ENCODE measurements at regions of chr11 and their contacts with region 1.

Region 1: DNA sequence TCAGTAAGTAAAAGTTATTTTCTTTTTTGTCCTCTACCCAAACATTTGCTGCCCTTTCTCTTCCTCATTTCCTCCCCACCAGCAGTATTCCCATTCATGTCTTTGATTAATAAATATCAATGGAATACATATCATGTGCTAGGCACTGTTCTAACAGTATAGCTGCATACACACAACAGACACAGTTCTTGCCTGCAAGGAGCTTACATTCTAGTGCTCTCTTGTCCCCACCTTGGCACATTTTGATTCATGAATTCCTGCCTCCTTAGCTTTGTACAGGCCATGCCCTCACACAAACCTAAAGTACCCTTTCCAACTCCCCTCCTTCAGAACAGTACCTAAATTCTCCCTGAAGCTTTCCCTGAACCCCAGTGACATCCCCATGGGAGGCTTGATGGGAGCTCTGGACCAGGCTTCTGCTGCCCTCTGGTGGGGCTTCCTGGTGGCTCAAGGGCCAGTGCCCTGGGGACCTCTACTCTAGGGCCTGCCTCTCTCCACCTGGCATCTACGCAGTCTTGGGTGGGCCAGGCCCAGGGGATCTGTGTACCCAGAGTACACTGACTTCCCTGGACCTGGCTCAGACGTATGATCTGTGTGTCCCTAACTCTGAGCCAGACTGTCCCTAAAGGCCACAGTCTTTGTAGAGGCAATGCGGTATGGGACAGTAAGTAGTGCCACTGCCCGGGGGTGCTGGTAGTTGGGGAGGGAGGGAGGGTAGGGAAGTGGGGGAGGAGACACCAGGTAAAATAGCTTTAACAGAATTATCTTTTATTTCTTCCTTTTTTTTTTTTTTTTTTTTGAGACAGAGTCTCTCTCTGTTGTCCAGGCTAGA is 14.1 kb downstream of the RPS13 start:
- DNase-seq: peak; percentile 74
- H3K4me3 ChIP-seq: no peak overlapping the region
- H3K27ac ChIP-seq: no peak overlapping the region
- H3K4me1 ChIP-seq: no peaks in the 10 kb centered on the region
- H3K27me3 ChIP-seq: no peaks in the 10 kb centered on the region
- CTCF ChIP-seq: peak; percentile 69 to 78 (median 75)
- EP300 ChIP-seq: no peak
- POLR2A ChIP-seq: no peak

Region 2: GRCh38 chr11:16809886-16810668 is 253.3 kb before region 1 on chr11:
- in situ Hi-C with region 1: loop called in 3 of 4 experiments (anchors 10 to 25 kb)
- intact Hi-C with region 1: no loop called
- DNase-seq: no peak
- H3K4me3 ChIP-seq: no peak overlapping the region
- H3K27ac ChIP-seq: no peak overlapping the region
- H3K4me1 ChIP-seq: peaks cover 0 to 15% (median 2%) of the 10 kb centered on the region in 4 donors
- H3K27me3 ChIP-seq: no peaks in the 10 kb centered on the region
- CTCF ChIP-seq: no peak
- EP300 ChIP-seq: no peak
- POLR2A ChIP-seq: no peak

Region 3: DNA sequence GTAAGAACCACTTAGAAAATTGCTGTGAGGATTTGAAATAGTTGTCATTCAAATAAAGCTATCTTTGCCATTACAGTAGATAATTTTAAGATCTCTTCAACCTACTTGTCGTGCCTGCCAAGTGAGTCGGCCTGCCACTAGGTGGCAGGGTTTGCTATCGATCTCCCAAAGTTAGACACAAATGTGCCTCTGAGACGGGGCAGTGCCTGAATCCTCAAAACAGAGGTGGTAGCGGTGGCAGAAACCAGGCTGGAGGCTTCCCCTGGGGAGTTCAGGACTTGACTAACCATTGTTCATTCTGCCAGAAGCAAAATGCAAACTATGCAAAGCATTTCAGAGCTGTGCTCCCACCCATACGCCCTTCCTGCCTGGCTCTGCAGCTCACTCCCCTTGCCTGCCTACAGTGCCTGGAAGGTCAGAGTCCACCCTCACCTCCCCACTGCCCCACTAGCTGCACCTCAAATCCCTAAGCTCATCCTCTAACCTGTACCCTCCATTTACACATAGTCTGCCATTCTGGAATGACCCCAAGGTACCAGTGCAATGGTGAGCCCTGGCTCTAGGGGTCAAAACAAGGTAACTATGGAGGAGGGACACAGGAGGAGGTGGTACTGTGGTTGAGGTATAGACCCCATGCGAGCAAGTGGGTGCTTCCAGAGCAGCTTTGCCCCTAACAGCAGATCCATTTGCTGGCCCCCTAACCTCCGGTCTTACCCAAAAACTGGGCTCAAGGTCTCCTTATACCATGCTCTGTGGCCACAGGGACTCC is 242.9 kb before region 1 on chr11:
- in situ Hi-C with region 1: loop called in 3 of 4 experiments (anchors 10 to 25 kb)
- intact Hi-C with region 1: no loop called
- DNase-seq: peak; percentile 80
- H3K4me3 ChIP-seq: no peak overlapping the region
- H3K27ac ChIP-seq: no peak overlapping the region
- H3K4me1 ChIP-seq: peaks cover 0 to 6% (median 3%) of the 10 kb centered on the region in 4 donors
- H3K27me3 ChIP-seq: no peaks in the 10 kb centered on the region
- CTCF ChIP-seq: peak; percentile 74 to 83 (median 82)
- EP300 ChIP-seq: no peak
- POLR2A ChIP-seq: no peak

Region 4: GRCh38 chr11:16945671-16946469 is 117.5 kb before region 1 on chr11:
- in situ Hi-C with region 1: loop called in 2 of 4 experiments (anchors 5 to 10 kb)
- intact Hi-C with region 1: no loop called
- DNase-seq: peak; percentile 76
- H3K4me3 ChIP-seq: no peak overlapping the region
- H3K27ac ChIP-seq: no peak overlapping the region
- H3K4me1 ChIP-seq: peaks cover 0 to 10% (median 0%) of the 10 kb centered on the region in 4 donors
- H3K27me3 ChIP-seq: no peaks in the 10 kb centered on the region
- CTCF ChIP-seq: peak; percentile 47 to 77 (median 69)
- EP300 ChIP-seq: no peak
- POLR2A ChIP-seq: no peak

Measured in transverse colon (tissue), 4 donors.